OCI-LY7 (cell line): ENCODE measurements at regions of chr7 and their contacts with region 1.

Region 1: DNA sequence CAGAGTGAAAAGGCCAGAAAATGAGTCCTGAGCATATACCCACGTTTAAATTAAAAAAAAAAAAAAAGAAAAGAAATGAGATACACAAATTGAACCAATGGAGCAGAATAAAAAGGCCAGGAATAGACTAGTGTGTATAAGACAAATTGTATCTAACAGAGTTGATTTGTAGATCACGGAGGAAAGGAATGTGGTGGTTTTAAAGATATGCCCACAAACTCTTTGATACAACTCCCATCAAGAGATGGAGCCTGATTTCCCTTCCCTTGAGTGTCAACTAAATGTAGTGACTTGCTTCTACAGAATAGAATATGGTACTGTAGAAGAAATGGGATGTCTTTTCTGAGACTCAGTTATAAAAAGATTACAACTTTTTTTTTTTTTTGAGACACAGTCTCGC is 10.4 kb downstream of the SYPL1 start:
- DNase-seq: no peak
- H3K4me3 ChIP-seq: peak overlapping the region; percentile 20
- H3K27ac ChIP-seq: peak overlapping the region; percentile 60
- H3K4me1 ChIP-seq: peaks cover 90% of the 10 kb centered on the region
- CTCF ChIP-seq: no peak

Region 2: DNA sequence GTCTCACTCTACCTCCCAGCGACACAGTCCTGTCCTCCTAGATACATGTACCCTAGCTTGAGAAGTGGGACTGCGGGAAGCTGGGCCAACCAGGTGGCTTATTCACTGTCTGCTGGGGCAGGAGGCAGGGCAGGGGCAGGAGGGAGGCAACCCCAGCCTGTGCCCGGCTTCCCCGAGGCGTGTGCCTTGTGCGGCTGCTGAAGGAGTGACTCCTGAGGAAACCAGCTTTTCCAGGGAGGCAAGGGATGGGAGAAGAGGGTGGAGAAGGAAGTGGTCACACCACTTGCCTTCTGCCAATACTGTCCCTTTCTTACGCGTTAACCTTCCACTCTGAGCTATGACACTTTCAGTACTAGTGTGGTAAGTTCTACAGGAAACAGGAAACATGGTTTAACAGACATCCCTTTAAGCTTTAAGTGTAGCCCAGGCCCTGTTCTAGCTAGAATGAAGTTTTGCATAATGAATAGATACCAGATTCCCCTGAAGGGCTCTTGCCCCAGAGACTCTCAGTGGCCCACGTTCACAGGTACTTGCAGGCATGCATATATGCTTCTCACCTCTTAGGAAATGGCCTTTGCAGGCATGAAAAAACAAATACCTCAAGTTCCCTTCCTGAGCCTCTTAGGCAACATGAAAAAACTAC is 30.2 kb before region 1 on chr7:
- CTCF ChIA-PET with region 1: no interaction called
- POLR2A ChIA-PET with region 1: interaction called, 297 read pairs
- intact Hi-C with region 1: no loop called
- DNase-seq: peak; percentile 96
- H3K4me3 ChIP-seq: peak overlapping the region; percentile 70
- H3K27ac ChIP-seq: peak overlapping the region; percentile 96
- H3K4me1 ChIP-seq: peaks cover 98% of the 10 kb centered on the region
- CTCF ChIP-seq: no peak

Region 3: GRCh38 chr7:106080300-106080987 is 21.3 kb before region 1 on chr7:
- CTCF ChIA-PET with region 1: no interaction called
- POLR2A ChIA-PET with region 1: interaction called, 297 read pairs
- intact Hi-C with region 1: no loop called
- DNase-seq: no peak
- H3K4me3 ChIP-seq: no peak overlapping the region
- H3K27ac ChIP-seq: no peak overlapping the region
- H3K4me1 ChIP-seq: peaks cover 84% of the 10 kb centered on the region
- CTCF ChIP-seq: no peak

Region 4: GRCh38 chr7:106112117-106112971 is 10.6 kb after region 1 on chr7 and contains the start of gene SYPL1:
- CTCF ChIA-PET with region 1: no interaction called
- POLR2A ChIA-PET with region 1: interaction called, 22 read pairs
- intact Hi-C with region 1: no loop called
- DNase-seq: peak; percentile 96
- H3K4me3 ChIP-seq: peak within 1 kb of the TSS; percentile 80
- H3K27ac ChIP-seq: peak within 1 kb of the TSS; percentile 83
- H3K4me1 ChIP-seq: peaks cover 62% of the 10 kb centered on the region
- CTCF ChIP-seq: peak; percentile 52; the same call in 1 of the 2 replicates
- total RNA-seq, gene SYPL1: 30.4 and 34.1 TPM in 2 replicates

Region 5: DNA sequence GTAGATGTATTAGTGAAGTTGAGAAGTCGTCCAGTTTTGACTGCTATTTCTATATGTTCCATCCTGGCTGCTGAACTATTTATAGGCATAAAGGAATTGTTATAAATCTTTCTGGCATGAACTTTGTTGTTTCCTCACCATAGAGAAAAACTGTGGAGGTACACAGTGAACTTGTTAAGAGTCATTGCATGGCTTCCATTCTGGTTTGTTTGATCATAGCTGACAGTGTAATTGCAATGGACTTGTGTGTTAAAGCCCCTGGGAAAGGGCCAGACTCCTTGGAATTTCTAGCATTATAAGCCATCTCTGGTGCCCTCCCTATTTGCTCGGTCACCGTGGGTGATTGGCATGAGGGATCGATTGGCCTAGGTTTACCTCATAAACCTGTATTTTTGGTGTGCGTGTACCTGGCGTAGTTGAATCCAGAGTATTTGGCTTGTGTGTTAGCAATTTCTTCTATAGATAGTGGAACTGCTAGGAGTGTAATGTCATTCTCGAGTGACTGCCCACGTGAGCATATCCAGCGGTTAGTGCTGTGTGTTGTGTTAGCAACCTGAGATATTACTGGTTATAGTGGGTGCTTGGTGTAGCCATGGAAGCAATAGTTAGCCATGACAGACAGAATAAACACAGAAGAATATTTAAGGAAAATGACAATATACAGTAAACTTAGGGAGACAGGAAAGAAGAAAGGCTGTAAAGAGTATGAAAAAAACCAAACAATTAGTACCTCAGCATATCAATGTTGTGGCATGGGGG is 16.2 kb after region 1 on chr7:
- CTCF ChIA-PET with region 1: no interaction called
- POLR2A ChIA-PET with region 1: interaction called, 22 read pairs
- intact Hi-C with region 1: no loop called
- DNase-seq: no peak
- H3K4me3 ChIP-seq: peak overlapping the region; percentile 28
- H3K27ac ChIP-seq: peak overlapping the region; percentile 83
- H3K4me1 ChIP-seq: peaks cover 89% of the 10 kb centered on the region
- CTCF ChIP-seq: no peak

Region 6: GRCh38 chr7:106187613-106188350 is 86.1 kb after region 1 on chr7:
- CTCF ChIA-PET with region 1: no interaction called
- POLR2A ChIA-PET with region 1: no interaction called
- intact Hi-C with region 1: no loop called
- DNase-seq: no peak
- H3K4me3 ChIP-seq: no peak overlapping the region
- H3K27ac ChIP-seq: no peak overlapping the region
- H3K4me1 ChIP-seq: no peaks in the 10 kb centered on the region
- CTCF ChIP-seq: no peak